ENCODE measurements at regions of chr19 and their contacts with region 1.

Region 1: DNA sequence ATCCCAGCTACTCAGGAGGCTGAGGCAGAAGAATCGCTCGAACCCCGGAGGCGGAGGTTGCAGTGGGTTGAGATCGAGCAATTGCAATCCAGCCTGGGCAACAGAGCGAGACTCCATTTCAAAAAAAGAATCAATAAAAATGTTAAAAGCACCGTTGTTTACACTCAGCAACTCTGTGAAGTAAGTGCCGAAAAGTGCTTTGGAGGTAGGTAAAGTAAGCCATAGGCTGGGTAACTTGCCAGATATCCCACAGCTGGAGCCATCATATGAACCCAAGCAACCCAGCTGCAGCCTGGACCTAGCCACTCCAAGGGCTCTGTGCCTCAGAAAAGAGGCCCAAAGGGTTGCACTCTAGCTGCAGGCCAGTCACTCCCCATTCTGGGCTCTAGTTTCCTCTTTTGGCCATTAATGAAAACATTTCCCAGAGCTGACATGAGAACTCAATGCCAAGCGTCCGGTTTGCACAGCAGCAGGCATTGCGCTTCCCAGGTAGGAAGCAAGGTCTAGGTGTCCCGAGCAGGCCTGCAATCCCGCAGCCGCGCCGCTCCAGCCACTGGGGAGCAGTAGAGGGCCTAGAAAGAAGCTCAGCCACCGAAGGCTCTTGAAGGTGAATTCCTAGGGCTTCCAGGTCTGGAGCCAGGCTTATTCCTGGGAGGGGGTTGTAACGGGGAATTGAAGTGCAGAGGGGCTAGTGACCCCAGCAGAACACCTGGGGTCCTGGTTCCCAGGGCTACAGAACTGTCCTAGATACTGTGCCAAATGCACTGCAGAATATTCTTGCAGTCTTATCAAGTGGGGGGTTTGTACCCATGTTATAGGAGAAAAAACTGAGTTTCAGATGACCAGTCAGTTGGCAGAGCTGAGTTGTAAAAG is 4.1 kb upstream of the CD79A start:
- DNase-seq: peak; percentile 75
- ATAC-seq: peak; percentile 84
- H3K4me3 ChIP-seq: no peak overlapping the region
- H3K27ac ChIP-seq: no peak overlapping the region
- H3K4me1 ChIP-seq: peaks cover 8% of the 10 kb centered on the region; the same call in 1 of the 2 replicates
- H3K27me3 ChIP-seq: no peaks in the 10 kb centered on the region
- CTCF ChIP-seq: peak; percentile 78

Region 2: DNA sequence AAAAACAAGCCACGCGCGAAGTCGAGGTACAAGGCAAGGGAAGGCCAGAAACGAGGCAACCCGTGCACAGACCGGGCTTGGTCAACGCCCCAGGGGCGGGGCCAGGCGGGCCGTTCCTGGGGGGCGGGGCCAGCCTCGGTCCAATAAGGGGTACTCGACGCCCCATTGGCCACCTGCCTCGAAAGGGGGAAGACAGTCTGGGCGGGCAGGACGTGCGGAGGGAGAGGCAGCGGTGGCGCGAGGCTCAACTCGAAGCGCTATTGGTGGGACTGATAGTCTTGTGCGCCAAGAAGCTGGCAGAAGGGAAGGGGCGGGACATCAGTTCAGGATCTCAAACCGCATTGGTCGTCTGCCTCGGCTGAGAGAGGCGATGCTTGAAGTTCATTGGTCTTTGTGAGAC is 28.4 kb before region 1 on chr19 and contains the start of gene LYPD4:
- CTCF ChIA-PET with region 1: no interaction called
- POLR2A ChIA-PET with region 1: no interaction called
- intact Hi-C with region 1: no loop called
- DNase-seq: no peak
- ATAC-seq: no peak
- H3K4me3 ChIP-seq: no peak within 1 kb of the TSS
- H3K27ac ChIP-seq: no peak within 1 kb of the TSS
- H3K4me1 ChIP-seq: no peaks in the 10 kb centered on the region
- H3K27me3 ChIP-seq: no peaks in the 10 kb centered on the region
- CTCF ChIP-seq: no peak
- total RNA-seq, gene LYPD4: not detected in 2 replicates

Region 3: DNA sequence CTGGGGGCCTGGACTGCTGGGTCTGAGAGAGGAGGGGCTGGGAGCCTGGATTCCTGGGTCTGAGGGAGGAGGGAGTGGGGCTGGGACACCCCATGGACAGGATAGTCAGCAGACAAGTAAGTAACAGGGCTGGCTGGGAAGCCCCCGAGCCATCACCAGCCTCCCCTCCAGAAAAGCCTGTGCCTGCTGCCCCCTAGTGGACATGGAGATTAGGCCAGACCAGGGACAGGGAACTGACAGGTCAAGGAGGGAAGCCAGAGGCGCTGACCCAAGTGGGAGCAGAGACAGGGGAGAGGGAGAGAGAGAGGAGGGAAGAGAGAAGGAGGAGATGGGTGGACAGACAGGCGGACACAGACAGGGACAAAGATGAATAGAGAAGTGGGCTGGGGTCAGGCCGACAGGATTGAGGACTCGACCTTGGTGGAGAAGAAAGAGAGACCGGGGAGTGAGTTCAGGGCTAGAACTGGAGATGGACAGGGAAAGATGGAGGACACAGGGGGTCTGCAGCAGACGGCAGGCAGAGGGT is 61.9 kb after region 1 on chr19:
- CTCF ChIA-PET with region 1: no interaction called
- POLR2A ChIA-PET with region 1: no interaction called
- intact Hi-C with region 1: loop called (anchors 5 kb)
- DNase-seq: peak; percentile 65
- ATAC-seq: peak; percentile 63
- H3K4me3 ChIP-seq: no peak overlapping the region
- H3K27ac ChIP-seq: no peak overlapping the region
- H3K4me1 ChIP-seq: 0 out of 2 replicates have a peak, but pooled peaks cover 9% of the 10 kb centered on the region
- H3K27me3 ChIP-seq: 0 out of 2 replicates have a peak, but pooled peaks cover 8% of the 10 kb centered on the region
- CTCF ChIP-seq: peak; percentile 82